Activated naive CD4-positive, alpha-beta T cell treated with anti-CD3 and anti-CD28 coated beads for 36 hours (primary cell): ENCODE measurements at regions of chr14 and their contacts with region 1.

Region 1: DNA sequence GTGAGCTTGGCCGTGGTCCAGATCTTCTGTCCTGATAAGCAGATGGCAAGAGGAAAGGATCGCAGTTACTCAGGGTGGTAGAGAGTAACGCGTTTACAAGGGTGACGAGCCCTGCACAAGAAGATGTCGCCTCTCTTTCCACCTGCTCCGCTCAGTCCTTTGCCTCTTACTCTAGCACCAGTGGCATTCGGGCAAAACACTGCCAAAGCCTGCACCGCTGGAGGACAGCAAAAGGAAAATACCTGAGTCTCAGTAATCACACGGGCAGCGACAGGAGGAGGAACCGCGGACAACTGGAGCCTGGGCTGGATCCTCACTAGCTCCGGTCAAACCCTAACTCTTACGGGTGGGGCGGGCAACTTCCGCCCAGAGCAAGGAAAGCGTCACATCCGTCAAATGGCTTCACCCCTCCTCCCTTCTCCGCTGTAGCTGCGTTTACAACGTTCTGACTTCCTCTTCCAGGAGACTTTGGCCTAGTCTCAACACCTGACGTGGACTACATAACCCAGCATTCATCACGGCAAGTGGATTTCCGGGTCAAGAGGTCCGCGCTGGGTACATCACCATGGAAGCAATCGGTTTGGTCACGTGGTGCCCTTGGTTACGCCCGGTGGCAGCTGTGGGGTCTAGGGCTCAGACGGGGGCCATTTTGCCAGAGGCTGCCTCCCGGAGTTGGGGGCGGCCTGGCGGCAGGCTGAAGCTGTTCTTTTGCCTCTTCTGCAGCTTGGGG is at the starts of genes KLHL28 and TOGARAM1:
- DNase-seq: peak; percentile 98
- H3K4me3 Mint-ChIP-seq: no peak within 1 kb of the TSS
- H3K27ac Mint-ChIP-seq: no peak within 1 kb of the TSS
- H3K4me1 Mint-ChIP-seq: peaks cover 52% of the 10 kb centered on the region
- H3K27me3 Mint-ChIP-seq: no peaks in the 10 kb centered on the region
- total RNA-seq, gene KLHL28: 10.8 to 12.7 TPM
- total RNA-seq, gene TOGARAM1: 3.1 to 3.3 TPM

Region 2: DNA sequence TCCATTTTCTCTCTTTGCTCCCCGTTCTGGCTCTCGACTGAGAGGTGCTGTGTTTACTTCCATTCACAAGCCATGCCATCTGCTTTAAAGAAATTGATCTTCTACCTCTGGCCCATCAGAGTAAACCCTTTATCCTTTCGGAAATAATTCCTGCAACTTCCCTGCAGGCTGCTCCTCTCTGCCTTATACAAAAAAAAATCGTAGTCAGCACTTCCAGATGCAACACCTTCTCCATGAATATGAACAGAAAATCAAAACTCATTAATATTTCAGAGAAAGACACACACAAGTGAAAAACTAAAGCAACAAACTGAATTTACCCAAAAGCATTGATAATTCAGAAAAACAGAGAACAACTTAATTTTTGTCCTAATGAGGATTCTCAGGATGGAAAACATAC is 327.1 kb before region 1 on chr14:
- CTCF ChIA-PET with region 1: no interaction called
- intact Hi-C with region 1: no loop called
- DNase-seq: no peak
- H3K4me3 Mint-ChIP-seq: no peak overlapping the region
- H3K27ac Mint-ChIP-seq: no peak overlapping the region
- H3K4me1 Mint-ChIP-seq: no peaks in the 10 kb centered on the region
- H3K27me3 Mint-ChIP-seq: peaks cover 3% of the 10 kb centered on the region

Region 3: GRCh38 chr14:44767642-44768173 is 194.1 kb before region 1 on chr14:
- CTCF ChIA-PET with region 1: no interaction called
- intact Hi-C with region 1: loop called (anchors 5 kb)
- DNase-seq: no peak
- H3K4me3 Mint-ChIP-seq: no peak overlapping the region
- H3K27ac Mint-ChIP-seq: no peak overlapping the region
- H3K4me1 Mint-ChIP-seq: peaks cover 20% of the 10 kb centered on the region
- H3K27me3 Mint-ChIP-seq: peaks cover 14% of the 10 kb centered on the region

Region 4: GRCh38 chr14:44951051-44951450 is 10.7 kb before region 1 on chr14:
- CTCF ChIA-PET with region 1: no interaction called
- intact Hi-C with region 1: loop called (anchors 1 kb)
- DNase-seq: no peak
- H3K4me3 Mint-ChIP-seq: no peak overlapping the region
- H3K27ac Mint-ChIP-seq: no peak overlapping the region
- H3K4me1 Mint-ChIP-seq: peaks cover 34% of the 10 kb centered on the region
- H3K27me3 Mint-ChIP-seq: no peaks in the 10 kb centered on the region

Region 5: GRCh38 chr14:45083971-45084722 is 122.4 kb after region 1 on chr14 and contains the start of gene PRPF39:
- CTCF ChIA-PET with region 1: interaction called, 3 read pairs
- intact Hi-C with region 1: loop called (anchors 1 kb)
- DNase-seq: peak; percentile 94
- H3K4me3 Mint-ChIP-seq: peak within 1 kb of the TSS; percentile 96
- H3K27ac Mint-ChIP-seq: peak within 1 kb of the TSS; percentile 93
- H3K4me1 Mint-ChIP-seq: peaks cover 49% of the 10 kb centered on the region
- H3K27me3 Mint-ChIP-seq: no peaks in the 10 kb centered on the region
- total RNA-seq, gene PRPF39: 32.0 to 35.6 TPM

Region 6: GRCh38 chr14:45114327-45114726 is 152.6 kb after region 1 on chr14:
- CTCF ChIA-PET with region 1: no interaction called
- intact Hi-C with region 1: loop called (anchors 1 kb)
- DNase-seq: no peak
- H3K4me3 Mint-ChIP-seq: no peak overlapping the region
- H3K27ac Mint-ChIP-seq: peak overlapping the region; percentile 68
- H3K4me1 Mint-ChIP-seq: peaks cover 23% of the 10 kb centered on the region
- H3K27me3 Mint-ChIP-seq: no peaks in the 10 kb centered on the region

Region 7: GRCh38 chr14:45253068-45253753 is 291.4 kb after region 1 on chr14 and contains the start of gene MIS18BP1:
- CTCF ChIA-PET with region 1: no interaction called
- intact Hi-C with region 1: loop called (anchors 1 kb)
- DNase-seq: peak; percentile 96
- H3K4me3 Mint-ChIP-seq: peak within 1 kb of the TSS; percentile 89
- H3K27ac Mint-ChIP-seq: peak within 1 kb of the TSS; percentile 91
- H3K4me1 Mint-ChIP-seq: peaks cover 15% of the 10 kb centered on the region
- H3K27me3 Mint-ChIP-seq: no peaks in the 10 kb centered on the region
- total RNA-seq, gene MIS18BP1: 55.5 to 56.8 TPM